ENCODE measurements at regions of chr20 and their contacts with region 1.

Region 1: GRCh38 chr20:2523919-2524708 is 12.3 kb upstream of the TMC2 start:
- DNase-seq: peak; percentile 94
- H3K4me3 Mint-ChIP-seq: peak overlapping the region; percentile 85
- H3K27ac Mint-ChIP-seq: peak overlapping the region; percentile 85
- H3K4me1 Mint-ChIP-seq: peaks cover 14% of the 10 kb centered on the region
- H3K27me3 Mint-ChIP-seq: no peaks in the 10 kb centered on the region

Region 2: DNA sequence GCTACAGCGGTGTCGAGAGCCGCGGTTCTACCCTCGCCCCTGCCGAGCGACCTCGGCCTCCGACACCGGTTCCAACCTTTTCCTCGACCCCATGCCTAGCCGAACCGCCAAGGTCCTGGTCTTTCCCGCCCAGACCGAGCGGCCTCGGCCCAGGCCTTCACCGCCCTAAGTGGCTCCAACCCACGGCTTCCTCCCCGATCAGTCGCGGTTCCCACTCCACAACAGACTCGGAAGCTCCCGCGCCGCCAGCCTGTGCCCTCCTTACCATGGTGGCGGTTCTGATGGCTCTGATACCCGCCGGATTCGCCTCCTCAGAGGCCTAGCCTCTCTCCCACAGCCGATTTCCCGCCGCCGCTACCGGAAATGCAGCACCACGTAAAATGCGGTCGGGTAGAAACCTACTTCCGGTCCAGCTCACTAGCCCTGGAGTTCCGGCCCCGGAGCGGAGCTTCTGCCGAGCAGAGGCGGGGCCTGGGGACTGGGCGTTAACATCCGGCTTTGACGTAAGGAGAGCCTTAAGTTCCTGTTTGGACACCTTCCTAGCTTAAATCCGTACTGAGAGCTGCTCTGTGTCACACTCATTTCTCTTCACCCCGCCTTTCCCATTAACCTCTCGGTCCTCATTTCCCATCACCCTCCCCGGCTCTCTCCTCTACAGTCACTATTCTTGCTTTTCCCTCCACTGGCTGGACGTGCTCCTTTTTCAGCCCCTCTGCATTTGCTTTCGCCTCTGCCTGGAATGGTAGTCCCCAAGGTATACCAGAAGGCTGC is 53.5 kb before region 1 on chr20 and contains the start of gene SNRPB:
- CTCF ChIA-PET with region 1: interaction called, 36 read pairs
- POLR2A ChIA-PET with region 1: interaction called, 4 read pairs
- intact Hi-C with region 1: loop called (anchors 1 kb)
- DNase-seq: peak; percentile 98
- H3K4me3 Mint-ChIP-seq: peak within 1 kb of the TSS; percentile 100
- H3K27ac Mint-ChIP-seq: peak within 1 kb of the TSS; percentile 100
- H3K4me1 Mint-ChIP-seq: peaks cover 43% of the 10 kb centered on the region
- H3K27me3 Mint-ChIP-seq: no peaks in the 10 kb centered on the region
- total RNA-seq, gene SNRPB: 452 TPM

Region 3: GRCh38 chr20:2508631-2509467 is 15.3 kb before region 1 on chr20 and contains the start of gene ZNF343:
- CTCF ChIA-PET with region 1: interaction called, 134 read pairs
- POLR2A ChIA-PET with region 1: interaction called, 4 read pairs
- intact Hi-C with region 1: loop called (anchors 1 kb)
- DNase-seq: peak; percentile 86
- H3K4me3 Mint-ChIP-seq: peak within 1 kb of the TSS; percentile 100
- H3K27ac Mint-ChIP-seq: peak within 1 kb of the TSS; percentile 94
- H3K4me1 Mint-ChIP-seq: peaks cover 17% of the 10 kb centered on the region
- H3K27me3 Mint-ChIP-seq: peaks cover 8% of the 10 kb centered on the region
- total RNA-seq, gene ZNF343: 6.8 to 6.9 TPM

Region 4: GRCh38 chr20:2643708-2644107 is 119.6 kb after region 1 on chr20:
- CTCF ChIA-PET with region 1: interaction called, 26 read pairs
- POLR2A ChIA-PET with region 1: no interaction called
- intact Hi-C with region 1: no loop called
- DNase-seq: no peak
- H3K4me3 Mint-ChIP-seq: no peak overlapping the region
- H3K27ac Mint-ChIP-seq: no peak overlapping the region
- H3K4me1 Mint-ChIP-seq: no peaks in the 10 kb centered on the region
- H3K27me3 Mint-ChIP-seq: no peaks in the 10 kb centered on the region

Measured in activated CD4-positive, alpha-beta memory T cell treated with anti-CD3 and anti-CD28 coated beads for 36 hours (primary cell).